Mucosa of descending colon (tissue), 3 donors: ENCODE measurements at regions of chr22 and their contacts with region 1.

Region 1: DNA sequence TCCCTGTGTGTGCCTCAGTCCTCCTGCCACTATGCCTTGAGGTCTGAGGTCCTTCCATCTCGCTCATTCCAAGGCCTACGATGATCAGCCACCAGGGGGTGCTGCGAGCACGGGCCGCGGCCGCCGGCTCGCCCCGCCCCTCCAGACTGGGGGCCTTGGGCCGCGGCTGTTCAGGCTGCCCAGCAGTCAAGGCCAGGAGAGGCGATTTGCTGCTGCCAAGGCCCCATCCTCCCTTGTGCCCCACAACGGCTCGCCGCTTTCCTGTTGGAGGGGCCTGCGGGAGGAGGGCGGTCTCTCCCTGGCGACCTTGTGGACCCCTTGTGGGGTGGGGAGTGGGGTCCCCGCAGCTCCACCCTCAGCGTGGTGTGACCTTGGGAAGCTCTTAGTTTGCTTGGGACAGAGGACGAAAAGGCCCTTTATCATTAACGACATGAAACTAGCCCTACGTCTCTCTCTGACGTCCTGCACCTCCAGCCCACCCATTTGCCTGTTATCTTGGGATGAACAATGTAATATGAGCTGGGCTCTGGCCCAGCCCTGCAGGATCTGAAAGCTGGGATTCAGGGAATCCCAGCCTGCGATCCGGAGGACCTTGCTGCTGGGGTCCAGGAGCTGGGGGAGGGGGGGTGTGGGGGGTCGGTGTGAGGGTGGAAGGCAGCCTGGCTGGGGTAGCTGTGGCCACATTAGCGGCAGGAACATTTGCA is 5.3 kb upstream of the GALR3 start:
- DNase-seq: peak; percentile 78 to 93 (median 91)
- ATAC-seq: peak; percentile 91
- H3K4me3 ChIP-seq: no peak overlapping the region
- H3K4me1 ChIP-seq: peaks cover 15% of the 10 kb centered on the region
- CTCF ChIP-seq: peak; percentile 91

Region 2: DNA sequence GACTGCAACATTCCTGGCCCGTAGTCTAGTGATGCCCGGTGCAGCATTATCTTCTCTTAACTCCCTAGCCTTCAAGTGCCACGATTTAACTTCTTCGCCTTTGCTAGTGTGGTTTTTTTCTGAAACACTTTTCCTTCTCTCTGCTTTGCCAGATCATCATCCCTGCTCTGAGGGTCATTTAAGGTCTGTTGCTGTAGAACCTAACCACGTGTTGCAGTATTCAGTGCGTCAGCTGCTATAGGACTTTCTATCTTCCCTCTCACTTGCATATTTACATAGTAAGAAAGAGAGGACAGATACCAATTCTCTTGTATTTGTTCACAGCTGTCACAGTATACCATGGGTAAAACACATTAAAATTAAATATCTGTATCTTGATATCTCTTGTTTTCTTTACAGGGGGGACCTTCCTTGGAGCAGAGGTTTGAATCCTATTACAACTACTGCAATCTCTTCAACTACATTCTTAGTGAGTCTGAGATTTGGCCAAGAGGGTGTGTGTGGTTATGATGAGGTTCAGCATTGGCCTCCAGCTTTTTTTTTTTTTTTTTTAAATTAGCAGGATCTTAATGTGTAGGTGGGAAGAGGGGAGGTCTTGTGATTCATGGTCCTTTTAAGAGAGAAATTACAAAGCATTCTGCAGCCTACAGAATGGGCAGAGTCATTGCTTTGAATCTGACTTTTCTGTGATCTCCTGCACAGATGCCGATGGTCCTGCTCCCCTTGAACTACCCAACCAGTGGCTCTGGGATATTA is 44.9 kb after region 1 on chr22:
- intact Hi-C with region 1: loop called (anchors 5 kb)
- DNase-seq: no peak
- ATAC-seq: no peak
- H3K4me3 ChIP-seq: no peak overlapping the region
- H3K4me1 ChIP-seq: peaks cover 3% of the 10 kb centered on the region
- CTCF ChIP-seq: no peak

Region 3: DNA sequence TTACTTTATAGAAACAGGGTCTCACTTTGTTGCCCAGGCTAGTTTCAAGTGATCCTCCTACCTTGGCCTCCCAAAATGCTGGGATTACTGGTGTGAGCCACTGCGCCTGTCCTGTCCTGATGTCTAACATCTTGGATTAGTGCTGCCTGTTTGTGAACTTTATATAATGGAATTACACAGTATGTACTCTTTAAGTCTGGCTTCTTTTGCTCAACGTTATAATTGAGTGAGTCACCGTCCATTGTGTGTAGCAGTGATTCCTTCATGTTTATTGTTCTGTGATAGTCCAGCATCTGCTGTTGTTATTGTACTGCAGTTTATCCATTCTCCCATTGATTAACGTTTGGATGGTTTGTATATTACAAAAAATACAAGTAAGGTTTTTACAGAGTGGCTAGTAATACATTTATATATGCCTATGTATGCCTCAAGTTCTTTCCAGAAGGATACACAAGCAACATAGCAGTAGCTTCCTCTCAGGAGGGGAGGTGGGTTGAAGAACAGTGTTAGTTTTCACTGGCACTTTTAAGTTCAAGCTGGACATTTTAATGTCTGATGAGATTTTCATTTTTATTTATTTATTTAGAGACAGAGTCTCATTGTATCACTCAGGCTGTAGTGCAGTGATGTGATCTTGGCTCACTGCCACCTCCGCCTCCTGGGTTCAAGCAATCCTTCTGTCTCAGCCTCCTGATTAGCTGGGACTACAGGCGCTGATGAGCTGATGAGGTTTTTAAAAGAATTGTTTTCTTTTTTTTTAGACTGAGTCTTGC is 63.0 kb after region 1 on chr22:
- intact Hi-C with region 1: no loop called
- DNase-seq: no peak
- ATAC-seq: no peak
- H3K4me3 ChIP-seq: no peak overlapping the region
- H3K4me1 ChIP-seq: no peaks in the 10 kb centered on the region
- CTCF ChIP-seq: no peak

Region 4: GRCh38 chr22:37940698-37941376 is 123.0 kb after region 1 on chr22:
- intact Hi-C with region 1: no loop called
- DNase-seq: no peak
- ATAC-seq: no peak
- H3K4me3 ChIP-seq: no peak overlapping the region
- H3K4me1 ChIP-seq: no peaks in the 10 kb centered on the region
- CTCF ChIP-seq: no peak

Region 5: DNA sequence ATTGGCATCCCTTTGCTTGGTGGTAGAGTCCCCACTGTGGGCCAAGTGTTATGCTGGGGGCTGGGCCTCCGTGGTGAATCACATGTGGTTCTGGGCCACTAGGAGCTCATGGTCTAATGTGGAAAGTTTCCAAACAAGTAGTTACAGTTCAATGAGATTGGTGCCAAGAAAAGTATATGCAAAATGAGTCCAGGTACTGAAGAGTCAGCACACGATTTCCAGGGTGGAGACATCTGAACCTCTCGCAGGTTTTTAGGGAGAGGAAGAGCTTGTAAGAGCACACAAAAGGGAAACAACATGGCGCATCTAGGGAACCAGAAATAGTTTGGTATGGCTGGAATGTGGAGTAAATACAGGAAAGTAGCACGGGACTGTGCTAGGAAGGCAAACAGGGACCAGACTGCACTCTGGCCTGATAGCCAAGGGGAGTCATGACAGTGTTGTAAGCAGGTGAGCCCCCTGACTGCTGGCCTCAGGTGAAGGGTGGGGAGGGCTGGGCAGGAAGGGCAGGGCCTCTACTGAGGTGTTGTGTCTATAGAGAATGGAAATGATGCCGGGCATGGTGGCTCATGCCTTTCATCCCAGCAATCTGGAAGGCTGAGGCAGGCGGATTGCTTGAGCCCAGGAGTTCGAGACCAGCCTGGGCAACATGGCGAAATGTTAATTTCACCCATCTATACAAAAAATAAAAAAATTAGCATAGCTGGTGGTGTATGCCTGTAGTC is 148.2 kb after region 1 on chr22:
- intact Hi-C with region 1: loop called in 1 of 2 experiments (anchors 5 kb)
- DNase-seq: no peak
- ATAC-seq: no peak
- H3K4me3 ChIP-seq: no peak overlapping the region
- H3K4me1 ChIP-seq: no peaks in the 10 kb centered on the region
- CTCF ChIP-seq: no peak